GM12878 (cell line): ENCODE measurements at regions of chr1 and their contacts with region 1.

Region 1: GRCh38 chr1:42924082-42924850 is 34.4 kb downstream of the SLC2A1 start:
- DNase-seq: peak; percentile 72
- ATAC-seq: peak; percentile 95
- H3K4me3 ChIP-seq: peak overlapping the region; percentile 71
- H3K27ac ChIP-seq: peak overlapping the region; percentile 78
- H3K4me1 ChIP-seq: peaks cover 9% of the 10 kb centered on the region
- H3K27me3 ChIP-seq: no peaks in the 10 kb centered on the region
- CTCF ChIP-seq: peak; percentile 4 to 17 (median 5); a peak in 2 of 6 replicates
- EP300 ChIP-seq: peak in 1 of 2 experiments; percentile 30; a peak in 1 of 4 replicates
- POLR2A ChIP-seq: peak; percentile 87
- RAD21 ChIP-seq: no peak

Region 2: GRCh38 chr1:42766741-42767509 is 157.3 kb before region 1 on chr1 and contains the starts of genes C1orf50 and P3H1:
- CTCF ChIA-PET with region 1: interaction called, 10 read pairs
- POLR2A ChIA-PET with region 1: interaction called, 9 read pairs
- RAD21 ChIA-PET with region 1: interaction called, 4 read pairs
- SMC1A ChIA-PET with region 1: no interaction called
- in situ Hi-C with region 1: no loop called
- intact Hi-C with region 1: no loop called
- DNase-seq: peak; percentile 93
- ATAC-seq: peak; percentile 93
- H3K4me3 ChIP-seq: peak within 1 kb of the TSS; percentile 95
- H3K27ac ChIP-seq: peak within 1 kb of the TSS; percentile 84
- H3K4me1 ChIP-seq: peaks cover 4% of the 10 kb centered on the region; the same call in 1 of the 2 replicates
- H3K27me3 ChIP-seq: no peaks in the 10 kb centered on the region
- CTCF ChIP-seq: no peak
- EP300 ChIP-seq: no peak
- POLR2A ChIP-seq: peak; percentile 99
- RAD21 ChIP-seq: no peak
- polyA plus RNA-seq, gene C1orf50: 1.2 to 3.3 TPM
- polyA plus RNA-seq, gene P3H1: 0.72 to 3.1 TPM

Region 3: DNA sequence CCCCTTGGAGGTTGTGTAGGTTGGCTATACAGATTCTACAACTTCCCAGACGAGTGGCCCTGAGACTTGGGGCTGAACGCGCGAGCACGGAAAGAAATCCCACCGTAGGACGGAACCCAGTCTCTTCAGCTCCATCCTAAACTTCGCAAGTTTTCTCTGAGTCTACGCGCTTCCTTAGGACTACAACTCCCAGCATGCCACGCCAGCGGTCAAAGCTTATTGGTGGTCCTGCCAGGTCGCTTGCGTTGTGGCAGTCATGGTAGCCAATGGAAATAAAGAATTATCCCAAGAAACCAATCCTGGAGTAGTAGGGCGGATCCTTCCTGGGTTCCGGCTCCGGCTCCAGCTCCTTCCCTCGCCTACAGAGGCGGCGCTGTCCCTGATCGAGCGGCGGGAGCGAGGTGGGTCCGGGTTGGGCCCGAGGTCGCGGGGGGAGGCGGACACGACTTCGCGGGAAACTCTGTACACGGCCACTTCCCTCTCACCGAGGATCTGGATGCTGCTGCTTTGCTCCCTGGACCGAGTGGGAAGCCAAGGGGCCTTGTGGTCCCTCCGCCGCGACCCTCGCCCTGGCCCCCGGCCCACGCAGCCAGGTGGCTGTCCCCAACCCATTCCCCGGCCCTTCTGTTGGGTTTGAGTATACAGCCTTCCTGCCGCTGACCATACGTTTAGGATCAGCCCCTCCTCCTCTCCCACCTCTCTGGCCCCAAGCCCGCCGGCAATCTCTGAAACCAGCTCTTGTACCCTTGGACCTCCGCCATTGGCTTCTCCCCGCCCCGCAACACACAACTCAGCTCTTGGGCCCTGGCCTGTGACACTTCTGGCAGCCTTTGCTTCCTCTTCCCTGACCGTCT is 77.8 kb before region 1 on chr1 and contains the start of gene ZNF691:
- CTCF ChIA-PET with region 1: interaction called, 8 read pairs
- POLR2A ChIA-PET with region 1: no interaction called
- RAD21 ChIA-PET with region 1: interaction called, 16 read pairs
- SMC1A ChIA-PET with region 1: interaction called, 4 read pairs
- in situ Hi-C with region 1: no loop called
- intact Hi-C with region 1: no loop called
- DNase-seq: peak; percentile 92
- ATAC-seq: peak; percentile 98
- H3K4me3 ChIP-seq: peak within 1 kb of the TSS; percentile 97
- H3K27ac ChIP-seq: peak within 1 kb of the TSS; percentile 78
- H3K4me1 ChIP-seq: no peaks in the 10 kb centered on the region; the same call in 1 of the 2 replicates
- H3K27me3 ChIP-seq: no peaks in the 10 kb centered on the region
- CTCF ChIP-seq: peak; percentile 35 to 45 (median 39)
- EP300 ChIP-seq: no peak
- POLR2A ChIP-seq: peak; percentile 90
- RAD21 ChIP-seq: no peak
- polyA plus RNA-seq, gene ZNF691: 14.9 to 16.2 TPM

Region 4: GRCh38 chr1:42952303-42953001 is 28.2 kb after region 1 on chr1:
- CTCF ChIA-PET with region 1: interaction called, 6 read pairs
- POLR2A ChIA-PET with region 1: interaction called, 9 read pairs
- RAD21 ChIA-PET with region 1: interaction called, 15 read pairs
- SMC1A ChIA-PET with region 1: interaction called, 54 read pairs
- in situ Hi-C with region 1: loop called (anchors 5 kb)
- intact Hi-C with region 1: loop called (anchors 5 kb)
- DNase-seq: no peak
- ATAC-seq: peak; percentile 67
- H3K4me3 ChIP-seq: peak overlapping the region; percentile 88
- H3K27ac ChIP-seq: peak overlapping the region; percentile 62
- H3K4me1 ChIP-seq: peaks cover 59% of the 10 kb centered on the region
- H3K27me3 ChIP-seq: no peaks in the 10 kb centered on the region
- CTCF ChIP-seq: no peak
- EP300 ChIP-seq: 0 out of 4 replicates have a peak, but pooled peaks of 1 of the 2 experiments have one; percentile 8
- POLR2A ChIP-seq: 0 out of 2 replicates have a peak, but pooled peaks have one; percentile 16
- RAD21 ChIP-seq: no peak

Region 5: GRCh38 chr1:43059640-43060574 is 135.6 kb after region 1 on chr1:
- CTCF ChIA-PET with region 1: interaction called, 13 read pairs
- POLR2A ChIA-PET with region 1: interaction called, 3 read pairs
- RAD21 ChIA-PET with region 1: interaction called, 6 read pairs
- SMC1A ChIA-PET with region 1: interaction called, 5 read pairs
- in situ Hi-C with region 1: loop called (anchors 5 kb)
- intact Hi-C with region 1: no loop called
- DNase-seq: no peak
- ATAC-seq: no peak
- H3K4me3 ChIP-seq: no peak overlapping the region
- H3K27ac ChIP-seq: no peak overlapping the region
- H3K4me1 ChIP-seq: no peaks in the 10 kb centered on the region
- H3K27me3 ChIP-seq: no peaks in the 10 kb centered on the region
- CTCF ChIP-seq: no peak
- EP300 ChIP-seq: no peak
- POLR2A ChIP-seq: no peak
- RAD21 ChIP-seq: no peak